Activated naive CD4-positive, alpha-beta T cell treated with anti-CD3 and anti-CD28 coated beads for 36 hours (primary cell): ENCODE measurements at regions of chr1 and their contacts with region 1.

Region 1: GRCh38 chr1:86380257-86380861 is 15.8 kb downstream of the ODF2L start:
- DNase-seq: peak; percentile 18
- H3K4me3 Mint-ChIP-seq: no peak overlapping the region
- H3K27ac Mint-ChIP-seq: no peak overlapping the region
- H3K4me1 Mint-ChIP-seq: peaks cover 8% of the 10 kb centered on the region
- H3K27me3 Mint-ChIP-seq: no peaks in the 10 kb centered on the region

Region 2: DNA sequence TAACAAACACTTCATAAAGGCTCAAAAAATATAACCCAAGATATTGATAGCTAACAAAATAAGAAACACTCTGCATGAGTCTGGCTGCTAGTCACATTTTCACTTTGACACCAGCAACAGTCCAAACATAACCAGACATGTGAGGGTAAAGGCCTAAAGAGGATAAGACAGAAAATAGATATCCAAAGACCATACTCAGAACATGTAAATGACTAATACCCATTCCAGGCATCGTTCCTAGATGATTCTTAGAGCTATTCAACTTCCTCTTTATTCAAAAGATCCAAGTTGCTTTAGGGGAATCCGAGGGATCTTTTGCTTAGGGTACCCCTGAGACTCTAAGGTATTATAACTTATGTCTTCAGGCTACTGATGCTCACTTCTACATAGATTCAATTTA is 228.9 kb before region 1 on chr1:
- CTCF ChIA-PET with region 1: no interaction called
- intact Hi-C with region 1: no loop called
- DNase-seq: no peak
- H3K4me3 Mint-ChIP-seq: no peak overlapping the region
- H3K27ac Mint-ChIP-seq: no peak overlapping the region
- H3K4me1 Mint-ChIP-seq: no peaks in the 10 kb centered on the region
- H3K27me3 Mint-ChIP-seq: peaks cover 21% of the 10 kb centered on the region

Region 3: DNA sequence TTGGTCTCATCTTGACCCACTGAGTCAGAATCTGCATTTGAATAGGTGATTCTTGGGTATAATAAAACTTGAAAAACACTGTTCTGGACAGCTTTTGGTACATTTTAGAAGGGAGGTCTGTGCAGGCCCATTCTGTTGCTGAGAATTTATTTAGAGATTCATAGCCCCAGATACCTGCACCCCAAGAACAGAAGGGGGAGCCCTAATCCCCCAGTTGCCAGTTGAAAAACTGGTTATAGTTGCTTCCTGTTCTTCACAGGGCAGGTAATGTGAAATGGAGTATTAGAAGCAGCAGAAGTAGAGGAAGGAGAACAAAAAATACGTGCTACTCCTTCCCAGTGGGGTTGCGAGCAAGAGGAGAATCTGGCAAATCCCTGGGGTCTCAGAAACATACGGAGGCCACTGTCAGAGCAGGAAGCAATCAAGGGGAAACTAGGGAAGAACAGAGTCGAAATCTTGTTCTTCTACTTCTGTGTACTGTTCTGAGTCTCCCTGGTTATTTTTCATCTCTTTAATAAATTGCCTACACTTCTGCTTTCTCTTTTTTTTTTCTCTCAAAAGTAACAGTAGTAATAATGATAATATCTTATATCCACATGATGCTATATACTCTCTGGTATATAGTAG is 39.0 kb after region 1 on chr1:
- CTCF ChIA-PET with region 1: interaction called, 6 read pairs
- intact Hi-C with region 1: loop called (anchors 1 kb)
- DNase-seq: peak; percentile 71
- H3K4me3 Mint-ChIP-seq: peak overlapping the region; percentile 60
- H3K27ac Mint-ChIP-seq: no peak overlapping the region
- H3K4me1 Mint-ChIP-seq: peaks cover 4% of the 10 kb centered on the region
- H3K27me3 Mint-ChIP-seq: peaks cover 3% of the 10 kb centered on the region

Region 4: GRCh38 chr1:86507935-86508582 is 127.7 kb after region 1 on chr1:
- CTCF ChIA-PET with region 1: interaction called, 28 read pairs
- intact Hi-C with region 1: no loop called
- DNase-seq: peak; percentile 26
- H3K4me3 Mint-ChIP-seq: no peak overlapping the region
- H3K27ac Mint-ChIP-seq: no peak overlapping the region
- H3K4me1 Mint-ChIP-seq: peaks cover 3% of the 10 kb centered on the region
- H3K27me3 Mint-ChIP-seq: peaks cover 3% of the 10 kb centered on the region

Region 5: GRCh38 chr1:86833461-86834215 is 453.3 kb after region 1 on chr1:
- CTCF ChIA-PET with region 1: no interaction called
- intact Hi-C with region 1: loop called (anchors 2 kb)
- DNase-seq: peak; percentile 76
- H3K4me3 Mint-ChIP-seq: no peak overlapping the region
- H3K27ac Mint-ChIP-seq: no peak overlapping the region
- H3K4me1 Mint-ChIP-seq: peaks cover 4% of the 10 kb centered on the region
- H3K27me3 Mint-ChIP-seq: peaks cover 2% of the 10 kb centered on the region

Region 6: DNA sequence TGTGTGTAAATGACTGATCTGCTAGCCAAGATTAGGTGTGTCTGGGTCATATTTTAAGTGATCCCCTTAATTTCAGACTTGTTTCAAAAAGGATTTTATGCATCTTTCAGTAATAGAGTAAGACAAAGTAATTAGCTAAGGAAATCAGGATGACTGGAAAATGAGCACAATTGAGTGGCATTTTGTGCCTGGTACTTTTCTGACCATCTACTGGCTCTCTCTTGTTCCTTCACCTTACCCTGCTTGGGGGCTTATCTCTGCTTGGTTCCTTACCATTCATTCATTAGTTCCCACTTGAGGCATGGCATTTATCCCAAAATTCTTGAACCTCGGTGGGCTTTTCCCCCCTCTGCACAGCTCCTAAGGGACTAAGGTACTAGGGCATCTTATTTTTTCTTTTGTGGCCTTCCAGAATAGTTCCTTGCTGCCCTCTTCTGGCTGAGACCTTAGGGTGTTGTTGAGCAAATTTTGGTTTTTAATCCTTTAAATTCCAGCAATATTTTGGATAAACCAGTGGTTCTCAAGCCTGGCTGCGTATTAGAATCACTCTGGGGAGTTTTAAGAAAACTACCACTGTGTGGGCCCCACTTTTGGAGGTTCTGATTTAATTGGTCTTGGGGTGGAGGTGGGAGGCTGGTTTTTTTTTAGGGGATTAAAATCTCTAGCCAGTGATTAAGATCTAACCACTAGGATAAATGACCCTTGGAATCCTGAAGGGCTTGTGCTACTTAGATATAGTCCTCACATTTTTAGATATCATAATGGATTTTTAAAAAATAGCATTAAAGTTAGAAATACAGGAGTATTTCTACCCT is 584.9 kb after region 1 on chr1:
- CTCF ChIA-PET with region 1: no interaction called
- intact Hi-C with region 1: no loop called
- DNase-seq: peak; percentile 44
- H3K4me3 Mint-ChIP-seq: no peak overlapping the region
- H3K27ac Mint-ChIP-seq: no peak overlapping the region
- H3K4me1 Mint-ChIP-seq: no peaks in the 10 kb centered on the region
- H3K27me3 Mint-ChIP-seq: no peaks in the 10 kb centered on the region

Region 7: GRCh38 chr1:87084244-87084836 is 704.0 kb after region 1 on chr1:
- CTCF ChIA-PET with region 1: no interaction called
- intact Hi-C with region 1: loop called (anchors 1 kb)
- DNase-seq: no peak
- H3K4me3 Mint-ChIP-seq: no peak overlapping the region
- H3K27ac Mint-ChIP-seq: no peak overlapping the region
- H3K4me1 Mint-ChIP-seq: peaks cover 8% of the 10 kb centered on the region
- H3K27me3 Mint-ChIP-seq: no peaks in the 10 kb centered on the region